ENCODE measurements at regions of chr17 and their contacts with region 1.

Region 1: DNA sequence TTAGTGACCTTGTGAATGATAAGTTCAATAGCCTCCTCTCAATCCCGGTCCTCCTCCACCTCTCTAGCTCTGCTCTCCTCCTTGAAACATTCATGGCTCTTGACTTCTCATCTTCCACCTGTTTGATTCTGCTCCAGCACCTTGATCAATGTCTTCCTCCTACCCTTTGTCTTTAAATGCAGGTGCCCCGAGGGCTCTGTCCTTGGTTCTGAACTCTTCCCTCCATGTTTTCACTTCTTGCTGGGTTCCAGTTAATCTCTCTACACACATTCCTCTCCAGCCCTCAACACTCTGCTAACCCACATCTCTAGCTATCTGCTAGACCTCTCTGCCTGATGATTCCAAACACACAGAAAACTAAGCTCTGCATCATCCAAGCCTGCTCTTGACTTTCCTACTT is 13.4 kb downstream of the CD300E start:
- DNase-seq: no peak
- ATAC-seq: no peak
- H3K4me3 Mint-ChIP-seq: no peak overlapping the region
- H3K27ac Mint-ChIP-seq: no peak overlapping the region
- H3K4me1 Mint-ChIP-seq: peaks cover 17% of the 10 kb centered on the region
- H3K27me3 Mint-ChIP-seq: peaks cover 8% of the 10 kb centered on the region
- CTCF ChIP-seq: no peak

Region 2: GRCh38 chr17:74592087-74592990 is 17.8 kb before region 1 on chr17 and contains the start of gene CD300LD:
- CTCF ChIA-PET with region 1: no interaction called
- POLR2A ChIA-PET with region 1: no interaction called
- intact Hi-C with region 1: loop called (anchors 2 kb)
- DNase-seq: no peak
- ATAC-seq: peak; percentile 67
- H3K4me3 Mint-ChIP-seq: no peak within 1 kb of the TSS
- H3K27ac Mint-ChIP-seq: no peak within 1 kb of the TSS
- H3K4me1 Mint-ChIP-seq: peaks cover 16% of the 10 kb centered on the region
- H3K27me3 Mint-ChIP-seq: peaks cover 9% of the 10 kb centered on the region
- CTCF ChIP-seq: no peak
- total RNA-seq, gene CD300LD: not detected in 2 replicates

Measured in activated B cell treated with CpG ODN at 0.5 μM for 24 hours (primary cell).